ENCODE measurements at regions of chr12 and their contacts with region 1.

Region 1: GRCh38 chr12:104569346-104570173 is 112.8 kb downstream of the CHST11 start:
- DNase-seq: peak; percentile 61 to 84
- ATAC-seq: peak; percentile 78 to 93 (median 89)
- H3K4me3 ChIP-seq: peak overlapping the region; percentile 5
- H3K4me3 Mint-ChIP-seq: peak overlapping the region; percentile 87
- H3K27ac ChIP-seq: peak overlapping the region; percentile 61
- H3K27ac Mint-ChIP-seq: peak overlapping the region; percentile 88 to 92
- H3K4me1 ChIP-seq: peaks cover 46% of the 10 kb centered on the region
- H3K4me1 Mint-ChIP-seq: peaks cover 74 to 78% of the 10 kb centered on the region in 2 donors
- H3K27me3 ChIP-seq: no peaks in the 10 kb centered on the region
- H3K27me3 Mint-ChIP-seq: no peaks in the 10 kb centered on the region
- CTCF ChIP-seq: no peak

Region 2: DNA sequence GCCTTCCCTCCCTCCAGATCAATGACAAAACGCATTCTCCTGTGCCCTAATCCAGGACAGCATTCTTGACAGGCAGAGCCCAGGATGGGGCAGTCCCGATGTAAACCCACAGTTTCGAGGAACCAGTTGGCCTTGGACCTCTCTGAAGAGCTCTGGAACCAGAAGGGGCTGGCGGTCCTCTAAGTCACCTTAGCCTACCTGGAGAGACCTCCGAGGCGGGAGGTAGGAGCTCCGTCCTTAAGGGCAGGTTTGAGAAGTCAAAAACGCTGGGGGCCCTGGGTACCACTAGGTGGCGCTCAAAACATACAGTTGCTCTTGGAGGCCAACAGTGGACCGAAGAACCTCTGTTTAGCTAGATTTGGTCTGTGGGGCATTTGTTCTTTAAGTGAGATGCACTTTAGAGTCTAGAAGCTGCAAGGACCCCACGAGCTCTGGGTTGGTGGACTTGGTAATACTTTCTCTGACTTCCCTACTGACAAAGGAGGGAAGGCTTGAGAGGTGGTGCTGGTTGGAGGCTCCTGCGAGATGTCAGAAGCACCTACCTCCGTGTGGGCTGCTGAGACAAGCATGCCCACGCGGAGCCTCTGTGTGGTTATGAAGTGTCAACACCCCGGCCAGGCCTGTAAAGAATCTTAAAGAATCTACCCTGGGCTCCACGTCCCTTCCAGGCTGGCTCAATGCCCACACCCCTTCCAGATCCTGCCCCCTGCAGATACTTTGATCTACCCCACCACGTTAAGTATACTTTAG is 187.7 kb before region 1 on chr12:
- intact Hi-C with region 1: loop called (anchors 1 kb)
- DNase-seq: peak; percentile 73 to 92
- ATAC-seq: peak; percentile 88 to 94 (median 91)
- H3K4me3 ChIP-seq: no peak overlapping the region
- H3K4me3 Mint-ChIP-seq: no peak overlapping the region
- H3K27ac ChIP-seq: no peak overlapping the region
- H3K27ac Mint-ChIP-seq: peak overlapping the region in 1 of 2 donors; percentile 75
- H3K4me1 ChIP-seq: peaks cover 9% of the 10 kb centered on the region
- H3K4me1 Mint-ChIP-seq: peaks cover 11 to 18% of the 10 kb centered on the region in 2 donors
- H3K27me3 ChIP-seq: peaks cover 3% of the 10 kb centered on the region
- H3K27me3 Mint-ChIP-seq: peaks cover 6 to 7% of the 10 kb centered on the region in 2 donors
- CTCF ChIP-seq: peak; percentile 97

Region 3: DNA sequence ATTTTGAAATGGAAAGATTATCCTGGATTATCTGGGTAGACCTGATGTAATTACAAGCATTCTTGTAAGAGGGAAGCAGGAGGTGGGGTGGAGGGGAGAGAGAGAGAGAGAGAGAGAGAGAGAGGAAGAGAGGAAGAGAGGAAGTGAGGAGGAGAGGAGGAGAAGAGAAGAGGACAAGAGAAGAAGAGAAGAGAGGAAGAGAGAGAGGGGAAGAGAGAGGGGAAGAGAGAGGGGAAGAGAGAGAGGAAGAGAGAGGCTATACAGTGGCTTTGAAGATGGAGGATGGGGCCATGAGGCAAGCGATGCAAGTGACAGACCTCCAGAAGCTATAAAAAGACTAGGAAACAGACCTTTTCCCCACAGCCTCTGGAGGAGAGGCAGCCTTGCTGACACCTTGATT is 126.6 kb before region 1 on chr12:
- intact Hi-C with region 1: no loop called
- DNase-seq: no peak
- ATAC-seq: no peak
- H3K4me3 ChIP-seq: no peak overlapping the region
- H3K4me3 Mint-ChIP-seq: no peak overlapping the region
- H3K27ac ChIP-seq: no peak overlapping the region
- H3K27ac Mint-ChIP-seq: no peak overlapping the region
- H3K4me1 ChIP-seq: no peaks in the 10 kb centered on the region
- H3K4me1 Mint-ChIP-seq: peaks cover 0 to under 1% of the 10 kb centered on the region in 2 donors
- H3K27me3 ChIP-seq: no peaks in the 10 kb centered on the region
- H3K27me3 Mint-ChIP-seq: peaks cover 10 to 14% of the 10 kb centered on the region in 2 donors
- CTCF ChIP-seq: no peak

Region 4: DNA sequence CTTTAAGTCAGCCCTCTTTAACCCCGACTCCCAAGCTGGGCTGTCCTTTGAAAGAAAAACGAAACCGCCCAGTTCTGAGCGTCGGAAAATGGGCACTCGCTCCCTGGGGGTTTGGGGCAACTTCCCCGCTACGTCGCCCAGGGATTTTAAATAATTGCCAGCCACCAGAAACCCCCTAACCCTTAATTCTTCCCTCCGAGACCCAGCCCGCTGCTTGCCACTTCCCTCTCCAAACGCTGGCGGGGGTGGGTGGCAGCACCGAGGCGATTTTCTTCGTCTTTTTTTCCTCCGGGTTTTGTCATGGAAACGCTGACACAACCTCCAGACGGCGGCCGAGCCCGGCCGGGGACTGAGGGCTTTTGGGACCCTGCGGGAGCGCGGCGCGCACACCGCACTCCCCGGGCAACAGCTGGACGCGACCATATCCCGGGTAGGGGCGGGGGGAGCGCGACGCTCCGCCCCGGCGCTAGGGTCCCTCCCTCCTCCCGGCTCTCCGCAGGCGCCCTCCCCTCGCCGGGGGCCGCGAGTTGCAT is 113.1 kb before region 1 on chr12 and contains the start of gene CHST11:
- intact Hi-C with region 1: loop called (anchors 2 kb)
- DNase-seq: peak; percentile 67 to 85
- ATAC-seq: peak; percentile 71 to 81 (median 81)
- H3K4me3 ChIP-seq: peak within 1 kb of the TSS; percentile 96
- H3K4me3 Mint-ChIP-seq: peak within 1 kb of the TSS; percentile 99
- H3K27ac ChIP-seq: peak within 1 kb of the TSS; percentile 76
- H3K27ac Mint-ChIP-seq: peak within 1 kb of the TSS; percentile 91 to 93
- H3K4me1 ChIP-seq: peaks cover 31% of the 10 kb centered on the region
- H3K4me1 Mint-ChIP-seq: peaks cover 39 to 52% of the 10 kb centered on the region in 2 donors
- H3K27me3 ChIP-seq: no peaks in the 10 kb centered on the region
- H3K27me3 Mint-ChIP-seq: peaks cover 0 to 5% of the 10 kb centered on the region in 2 donors
- CTCF ChIP-seq: no peak
- total RNA-seq, gene CHST11: 85.3 to 118 (median 96.1) TPM

Region 5: GRCh38 chr12:104520242-104520900 is 49.2 kb before region 1 on chr12:
- intact Hi-C with region 1: loop called (anchors 1 kb)
- DNase-seq: no peak
- ATAC-seq: peak in 1 of 3 donors; percentile 16
- H3K4me3 ChIP-seq: no peak overlapping the region
- H3K4me3 Mint-ChIP-seq: peak overlapping the region; percentile 40
- H3K27ac ChIP-seq: no peak overlapping the region
- H3K27ac Mint-ChIP-seq: peak overlapping the region; percentile 87 to 90
- H3K4me1 ChIP-seq: peaks cover 37% of the 10 kb centered on the region
- H3K4me1 Mint-ChIP-seq: peaks cover 95 to 98% of the 10 kb centered on the region in 2 donors
- H3K27me3 ChIP-seq: no peaks in the 10 kb centered on the region
- H3K27me3 Mint-ChIP-seq: no peaks in the 10 kb centered on the region
- CTCF ChIP-seq: no peak

Region 6: GRCh38 chr12:104549815-104550480 is 19.6 kb before region 1 on chr12:
- intact Hi-C with region 1: loop called (anchors 2 kb)
- DNase-seq: no peak
- ATAC-seq: no peak
- H3K4me3 ChIP-seq: no peak overlapping the region
- H3K4me3 Mint-ChIP-seq: no peak overlapping the region
- H3K27ac ChIP-seq: no peak overlapping the region
- H3K27ac Mint-ChIP-seq: peak overlapping the region in 1 of 2 donors; percentile 84
- H3K4me1 ChIP-seq: peaks cover 64% of the 10 kb centered on the region
- H3K4me1 Mint-ChIP-seq: peaks cover 92 to 93% of the 10 kb centered on the region in 2 donors
- H3K27me3 ChIP-seq: no peaks in the 10 kb centered on the region
- H3K27me3 Mint-ChIP-seq: no peaks in the 10 kb centered on the region
- CTCF ChIP-seq: no peak

Region 7: GRCh38 chr12:104596134-104596799 is 26.7 kb after region 1 on chr12:
- intact Hi-C with region 1: no loop called
- DNase-seq: no peak
- ATAC-seq: no peak
- H3K4me3 ChIP-seq: no peak overlapping the region
- H3K4me3 Mint-ChIP-seq: no peak overlapping the region
- H3K27ac ChIP-seq: no peak overlapping the region
- H3K27ac Mint-ChIP-seq: peak overlapping the region in 1 of 2 donors; percentile 38
- H3K4me1 ChIP-seq: no peaks in the 10 kb centered on the region
- H3K4me1 Mint-ChIP-seq: peaks cover 56 to 80% of the 10 kb centered on the region in 2 donors
- H3K27me3 ChIP-seq: no peaks in the 10 kb centered on the region
- H3K27me3 Mint-ChIP-seq: no peaks in the 10 kb centered on the region
- CTCF ChIP-seq: no peak

Region 8: DNA sequence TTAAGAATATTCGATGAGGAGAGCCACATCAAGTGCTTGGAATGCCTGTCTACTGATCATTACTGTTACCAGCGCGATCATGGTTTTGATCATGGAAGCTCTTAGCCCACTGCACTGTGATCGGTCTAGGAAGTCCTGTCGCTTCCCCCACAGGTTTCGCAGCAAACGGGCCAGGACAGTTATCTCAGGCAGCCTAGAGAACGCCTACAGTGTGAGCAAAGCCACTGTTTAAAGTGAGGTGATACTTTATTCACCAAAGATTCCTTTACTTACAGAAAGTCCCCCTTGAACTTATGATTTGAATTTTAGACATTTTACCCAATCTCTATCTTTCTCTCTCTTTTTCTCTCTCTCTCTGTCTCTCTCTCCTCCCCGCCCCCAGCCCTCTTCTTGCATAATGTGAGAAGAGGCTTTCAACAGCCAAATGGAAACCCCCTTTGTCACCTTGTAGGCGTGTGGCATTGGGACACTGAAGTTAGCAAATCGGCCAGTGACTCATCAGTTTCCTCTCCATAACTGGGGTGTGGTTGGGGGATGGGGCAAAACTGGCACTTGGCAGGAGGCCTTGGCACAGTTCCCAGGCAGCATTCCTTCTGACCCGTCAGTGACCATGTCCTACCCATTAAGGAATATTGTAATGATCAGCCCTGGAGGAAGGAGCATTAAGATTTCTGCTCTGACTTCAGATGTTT is 102.0 kb after region 1 on chr12:
- intact Hi-C with region 1: loop called (anchors 1 kb)
- DNase-seq: peak; percentile 72 to 88
- ATAC-seq: peak; percentile 90 to 92 (median 91)
- H3K4me3 ChIP-seq: no peak overlapping the region
- H3K4me3 Mint-ChIP-seq: peak overlapping the region; percentile 87
- H3K27ac ChIP-seq: peak overlapping the region; percentile 56
- H3K27ac Mint-ChIP-seq: peak overlapping the region; percentile 85 to 93
- H3K4me1 ChIP-seq: peaks cover 55% of the 10 kb centered on the region
- H3K4me1 Mint-ChIP-seq: peaks cover 55 to 56% of the 10 kb centered on the region in 2 donors
- H3K27me3 ChIP-seq: no peaks in the 10 kb centered on the region
- H3K27me3 Mint-ChIP-seq: no peaks in the 10 kb centered on the region
- CTCF ChIP-seq: no peak

Region 9: GRCh38 chr12:104686196-104686595 is 116.6 kb after region 1 on chr12:
- intact Hi-C with region 1: loop called (anchors 5 kb)
- DNase-seq: no peak
- ATAC-seq: no peak
- H3K4me3 ChIP-seq: no peak overlapping the region
- H3K4me3 Mint-ChIP-seq: peak overlapping the region; percentile 53
- H3K27ac ChIP-seq: no peak overlapping the region
- H3K27ac Mint-ChIP-seq: peak overlapping the region; percentile 93
- H3K4me1 ChIP-seq: peaks cover 86% of the 10 kb centered on the region
- H3K4me1 Mint-ChIP-seq: peaks cover 89 to 94% of the 10 kb centered on the region in 2 donors
- H3K27me3 ChIP-seq: no peaks in the 10 kb centered on the region
- H3K27me3 Mint-ChIP-seq: no peaks in the 10 kb centered on the region
- CTCF ChIP-seq: no peak